ENCODE measurements at regions of chr20 and their contacts with region 1.

Region 1: DNA sequence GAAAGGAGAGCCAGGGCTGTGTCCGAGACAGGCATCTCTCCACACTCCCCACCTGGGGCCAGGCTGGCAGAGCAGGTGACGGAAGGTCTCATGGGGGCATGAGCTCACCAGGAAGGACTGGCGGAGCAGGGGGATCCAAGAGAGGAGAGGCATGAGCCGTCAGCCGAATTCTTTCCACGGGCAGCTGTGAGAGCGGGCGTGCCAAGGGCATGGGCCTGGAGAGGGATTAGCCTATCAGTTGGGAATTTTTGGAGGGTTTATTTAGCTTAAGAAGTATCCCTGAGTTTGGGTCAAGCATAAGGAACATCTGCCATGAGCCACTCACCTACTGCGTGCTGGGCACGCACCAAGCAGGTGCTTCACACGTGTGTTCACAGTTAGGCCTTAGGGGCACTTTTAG is 60.2 kb upstream of the ZNFX1 start:
- DNase-seq: no peak
- ATAC-seq: no peak
- H3K4me3 ChIP-seq: no peak overlapping the region
- H3K27ac ChIP-seq: peak overlapping the region; percentile 34; the same call in 1 of the 2 replicates
- H3K4me1 ChIP-seq: peaks cover 20% of the 10 kb centered on the region
- H3K27me3 ChIP-seq: no peaks in the 10 kb centered on the region
- CTCF ChIP-seq: no peak

Region 2: DNA sequence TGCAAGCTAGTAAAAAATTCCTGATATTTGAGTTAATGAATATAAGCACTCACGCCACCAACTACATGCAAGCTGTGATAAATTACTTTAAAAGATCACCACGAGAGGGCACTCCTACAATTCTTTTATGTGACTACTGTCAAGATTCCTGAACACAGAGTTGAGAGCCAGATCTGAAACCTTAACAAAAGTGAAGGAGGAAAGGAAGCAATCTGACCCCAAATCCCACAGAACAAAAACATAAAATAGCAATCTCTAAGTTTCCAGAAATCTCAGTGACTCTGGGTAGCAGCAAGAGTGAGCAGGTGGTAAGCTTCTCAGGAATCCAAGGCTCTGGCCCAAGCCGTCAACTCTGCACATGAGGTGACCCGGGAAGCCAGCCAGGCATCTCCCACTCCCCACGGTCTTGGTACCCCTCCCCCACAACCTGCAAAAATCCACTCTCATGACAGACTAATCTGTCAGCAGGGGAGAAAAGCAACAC is 205.0 kb before region 1 on chr20:
- CTCF ChIA-PET with region 1: interaction called, 14 read pairs
- POLR2A ChIA-PET with region 1: no interaction called
- in situ Hi-C with region 1: no loop called
- intact Hi-C with region 1: no loop called
- DNase-seq: peak; percentile 18
- ATAC-seq: peak; percentile 86
- H3K4me3 ChIP-seq: no peak overlapping the region
- H3K27ac ChIP-seq: no peak overlapping the region
- H3K4me1 ChIP-seq: no peaks in the 10 kb centered on the region
- H3K27me3 ChIP-seq: no peaks in the 10 kb centered on the region
- CTCF ChIP-seq: peak; percentile 72

Region 3: DNA sequence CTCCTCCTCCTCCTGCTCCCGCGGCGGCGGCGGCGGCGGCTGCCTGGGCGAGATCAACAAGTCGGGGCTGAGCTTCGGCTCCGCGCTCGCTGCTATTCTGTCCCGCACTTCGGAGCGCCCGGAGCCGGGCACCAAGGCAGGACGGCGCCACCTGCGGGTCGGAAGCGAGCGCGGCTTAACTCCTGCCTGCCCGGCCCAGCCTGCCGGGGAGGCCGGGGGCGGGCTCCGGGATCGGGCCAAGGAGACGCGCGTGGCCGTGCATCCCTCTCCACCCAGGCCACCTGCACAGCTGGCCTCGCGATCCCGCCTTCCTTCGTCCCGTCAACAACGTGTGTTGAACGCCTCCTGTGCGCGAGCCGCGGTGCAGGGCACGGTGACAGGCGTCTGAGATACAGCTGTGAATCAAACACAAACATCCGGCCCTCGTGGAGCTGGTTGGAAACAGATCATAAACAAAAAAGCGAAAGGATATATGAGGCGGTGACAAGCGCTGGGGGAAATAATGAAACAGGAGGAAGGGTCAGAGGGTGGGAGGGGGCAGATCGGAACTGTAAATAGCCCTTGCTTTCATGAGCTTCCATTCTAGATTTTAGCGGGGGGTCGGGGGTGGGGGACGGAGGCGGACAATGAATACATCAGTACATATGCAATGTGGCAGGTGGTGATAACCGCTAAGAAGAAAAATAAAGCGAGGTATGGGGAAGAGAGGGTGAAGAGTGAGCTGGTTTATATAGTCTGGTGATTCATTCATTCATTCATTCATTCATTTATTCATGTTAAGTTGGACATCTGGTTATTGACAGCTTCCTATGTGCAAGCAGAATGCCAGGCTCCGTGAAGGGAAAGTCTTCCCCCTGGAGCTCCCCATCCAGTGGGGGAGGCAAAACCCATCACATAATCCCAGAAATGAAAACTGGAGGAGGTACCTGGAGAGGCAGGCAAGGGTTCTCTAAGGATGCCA is 146.4 kb after region 1 on chr20:
- CTCF ChIA-PET with region 1: interaction called, 13 read pairs
- POLR2A ChIA-PET with region 1: no interaction called
- in situ Hi-C with region 1: no loop called
- intact Hi-C with region 1: loop called (anchors 2 kb)
- DNase-seq: no peak
- ATAC-seq: peak; percentile 99
- H3K4me3 ChIP-seq: peak overlapping the region; percentile 57 to 60
- H3K27ac ChIP-seq: peak overlapping the region; percentile 29; the same call in 1 of the 2 replicates
- H3K4me1 ChIP-seq: peaks cover 15% of the 10 kb centered on the region; the same call in 1 of the 2 replicates
- H3K27me3 ChIP-seq: peaks cover 3% of the 10 kb centered on the region; the same call in 1 of the 2 replicates
- CTCF ChIP-seq: peak; percentile 91

Region 4: DNA sequence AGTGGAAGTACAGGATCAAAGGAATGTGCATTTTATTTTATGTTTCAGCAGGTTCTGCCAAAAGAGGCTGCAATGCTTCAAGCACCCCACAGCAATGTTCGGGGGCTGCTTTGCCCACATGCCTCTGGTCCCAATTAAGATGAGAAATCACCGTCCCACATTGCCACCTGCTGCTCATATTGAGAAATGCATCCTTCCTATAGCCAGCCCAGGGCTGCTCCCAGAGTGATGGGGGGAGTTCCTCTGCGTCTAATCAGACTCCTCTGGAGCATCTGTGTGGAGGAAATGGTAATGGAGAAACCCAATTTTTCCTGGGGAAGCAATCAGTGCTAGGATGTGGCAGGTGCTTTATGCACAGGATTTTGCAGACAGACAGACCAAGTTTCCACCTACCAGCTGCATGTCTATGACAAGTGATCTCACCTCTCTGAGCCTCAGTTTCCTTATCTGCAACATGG is 196.2 kb after region 1 on chr20:
- CTCF ChIA-PET with region 1: interaction called, 8 read pairs
- POLR2A ChIA-PET with region 1: no interaction called
- in situ Hi-C with region 1: no loop called
- intact Hi-C with region 1: loop called (anchors 2 kb)
- DNase-seq: peak; percentile 47
- ATAC-seq: peak; percentile 92
- H3K4me3 ChIP-seq: no peak overlapping the region
- H3K27ac ChIP-seq: no peak overlapping the region
- H3K4me1 ChIP-seq: peaks cover 8% of the 10 kb centered on the region; the same call in 1 of the 2 replicates
- H3K27me3 ChIP-seq: no peaks in the 10 kb centered on the region
- CTCF ChIP-seq: peak; percentile 87

Region 5: GRCh38 chr20:49582413-49583334 is 244.6 kb after region 1 on chr20:
- CTCF ChIA-PET with region 1: interaction called, 10 read pairs
- POLR2A ChIA-PET with region 1: no interaction called
- in situ Hi-C with region 1: no loop called
- intact Hi-C with region 1: no loop called
- DNase-seq: no peak
- ATAC-seq: no peak
- H3K4me3 ChIP-seq: no peak overlapping the region
- H3K27ac ChIP-seq: peak overlapping the region; percentile 51
- H3K4me1 ChIP-seq: peaks cover 33% of the 10 kb centered on the region
- H3K27me3 ChIP-seq: no peaks in the 10 kb centered on the region
- CTCF ChIP-seq: no peak

Region 6: GRCh38 chr20:49610701-49611538 is 272.9 kb after region 1 on chr20:
- CTCF ChIA-PET with region 1: no interaction called
- POLR2A ChIA-PET with region 1: no interaction called
- in situ Hi-C with region 1: no loop called
- intact Hi-C with region 1: loop called (anchors 10 kb)
- DNase-seq: peak; percentile 61
- ATAC-seq: peak; percentile 90
- H3K4me3 ChIP-seq: peak overlapping the region; percentile 27 to 61
- H3K27ac ChIP-seq: no peak overlapping the region; the same call in 1 of the 2 replicates
- H3K4me1 ChIP-seq: peaks cover 17% of the 10 kb centered on the region
- H3K27me3 ChIP-seq: no peaks in the 10 kb centered on the region
- CTCF ChIP-seq: peak; percentile 100

Region 7: DNA sequence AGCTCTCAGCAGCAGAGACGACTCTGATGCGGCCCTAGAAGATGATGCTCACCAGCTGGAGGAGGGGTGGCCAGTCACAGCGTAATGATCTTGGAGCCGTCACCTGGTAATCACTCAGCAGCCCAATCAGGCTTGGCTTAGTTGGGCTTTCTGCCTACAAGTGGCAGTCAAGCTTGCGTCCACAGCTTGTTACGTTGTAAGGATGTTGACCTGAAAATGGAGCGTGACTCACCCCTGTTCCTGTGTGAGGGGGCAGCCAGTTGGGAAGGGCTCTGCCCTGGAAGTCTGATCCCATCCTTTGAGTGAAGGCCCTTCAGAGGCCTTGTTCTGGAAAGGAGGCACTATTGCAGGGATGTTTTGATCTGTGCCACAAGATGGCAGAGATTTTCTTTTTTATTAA is 527.5 kb after region 1 on chr20:
- CTCF ChIA-PET with region 1: interaction called, 13 read pairs
- POLR2A ChIA-PET with region 1: no interaction called
- in situ Hi-C with region 1: no loop called
- intact Hi-C with region 1: no loop called
- DNase-seq: no peak
- ATAC-seq: peak; percentile 51; the same call in 1 of the 2 replicates
- H3K4me3 ChIP-seq: no peak overlapping the region
- H3K27ac ChIP-seq: no peak overlapping the region
- H3K4me1 ChIP-seq: no peaks in the 10 kb centered on the region
- H3K27me3 ChIP-seq: no peaks in the 10 kb centered on the region
- CTCF ChIP-seq: no peak